Sciatic nerve (tissue), 2 donors: ENCODE measurements at regions of chr2 and their contacts with region 1.

Region 1: DNA sequence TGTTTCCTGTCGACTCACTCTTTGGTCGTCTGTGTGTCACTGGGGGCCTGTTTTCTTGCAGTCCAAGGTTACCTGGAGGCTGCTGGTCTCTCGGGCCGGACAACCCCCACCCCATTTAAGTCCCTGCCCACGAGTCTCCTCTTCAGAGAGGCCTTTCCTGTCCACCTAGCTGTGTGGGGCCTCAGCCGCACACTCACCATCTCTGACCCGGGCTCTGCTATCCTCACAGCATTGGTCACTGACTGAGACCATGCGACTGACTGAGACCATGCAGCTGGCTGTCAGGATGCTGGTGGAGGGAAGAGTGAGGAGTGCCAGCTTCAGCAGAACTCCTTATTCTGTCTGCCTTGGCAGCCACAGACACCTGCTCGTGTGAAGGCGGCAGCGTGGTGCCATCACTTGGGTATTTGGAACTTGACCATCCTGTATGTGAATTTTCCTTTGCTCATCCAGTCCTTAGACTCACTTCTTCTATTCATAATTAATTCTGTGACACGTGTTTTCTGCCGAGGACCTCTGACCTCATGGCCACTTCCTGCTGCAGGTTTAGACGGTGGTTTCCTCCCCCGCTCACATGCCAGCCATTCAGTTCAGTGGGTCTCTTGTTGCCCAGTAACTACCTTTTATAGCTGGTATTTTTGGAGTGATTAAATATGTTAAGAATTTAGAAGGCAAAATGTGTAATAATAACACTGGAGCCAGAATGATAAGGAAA is 47.5 kb upstream of the ASB1 start:
- DNase-seq: no peak
- ATAC-seq: no peak

Region 2: DNA sequence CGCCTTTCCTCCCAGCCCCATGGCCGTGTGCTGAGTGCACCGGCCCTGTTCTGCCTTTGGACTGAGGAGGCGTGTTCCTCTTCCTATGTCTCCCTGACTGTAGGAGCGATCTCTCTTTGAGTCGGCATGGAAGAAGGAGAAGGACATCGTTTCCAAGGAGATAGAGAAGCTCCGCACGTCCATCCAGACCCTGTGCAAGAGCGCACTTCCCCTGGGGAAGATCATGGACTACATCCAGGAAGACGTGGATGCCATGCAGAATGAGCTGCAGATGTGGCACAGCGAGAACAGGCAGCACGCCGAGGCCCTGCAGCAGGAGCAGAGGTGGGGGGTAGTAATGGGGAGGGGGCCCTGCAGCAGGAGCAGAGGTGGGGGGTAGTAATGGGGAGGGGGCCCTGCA is 18.1 kb after region 1 on chr2:
- intact Hi-C with region 1: no loop called
- DNase-seq: no peak
- ATAC-seq: no peak

Region 3: GRCh38 chr2:238409582-238410199 is 30.4 kb after region 1 on chr2:
- intact Hi-C with region 1: loop called (anchors 2 kb)
- DNase-seq: no peak
- ATAC-seq: peak; percentile 85

Region 4: DNA sequence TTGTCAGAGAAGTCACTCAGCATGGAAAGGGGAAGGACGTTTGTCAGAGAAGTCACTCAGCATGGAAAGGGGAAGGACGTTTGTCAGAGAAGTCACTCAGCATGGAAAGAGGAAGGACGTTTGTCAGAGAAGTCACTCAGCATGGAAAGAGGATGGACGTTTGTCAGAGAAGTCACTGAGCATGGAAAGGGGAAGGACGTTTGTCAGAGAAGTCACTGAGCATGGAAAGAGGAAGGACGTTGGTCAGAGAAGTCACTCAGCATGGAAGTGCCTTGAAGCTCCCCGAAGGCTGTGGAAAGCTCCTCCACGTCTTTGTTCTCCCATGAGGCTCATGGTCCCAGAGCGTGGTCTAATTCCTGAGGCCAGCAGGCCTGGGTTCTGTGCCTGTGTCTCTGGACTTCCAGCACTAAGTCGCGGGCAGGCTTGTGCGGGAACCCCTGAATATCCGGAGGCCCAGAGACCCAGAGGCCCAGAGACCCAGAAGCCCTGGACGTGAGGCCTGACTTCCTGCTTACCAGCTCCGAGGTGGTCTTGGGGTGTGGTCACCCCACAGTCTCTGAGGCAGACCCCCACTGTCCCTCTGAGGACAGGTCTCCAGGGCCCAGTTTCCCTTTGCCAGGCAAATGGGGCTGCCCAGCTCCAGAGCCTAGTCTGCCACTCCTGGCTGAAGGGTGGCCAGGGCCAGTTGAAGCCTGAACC is 398.3 kb after region 1 on chr2:
- intact Hi-C with region 1: no loop called
- DNase-seq: no peak
- ATAC-seq: no peak